Activated CD8-positive, alpha-beta T cell treated with anti-CD3 and anti-CD28 coated beads, Interleukin-2, amount 10 ng/mL, durations not matched to agents 7 days and 5 days (primary cell): ENCODE measurements at regions of chr6 and their contacts with region 1.

Region 1: GRCh38 chr6:125790358-125791150 is at the start of gene NCOA7:
- DNase-seq: peak; percentile 87
- ATAC-seq: peak; percentile 85
- H3K4me3 Mint-ChIP-seq: peak within 1 kb of the TSS; percentile 86
- H3K27ac Mint-ChIP-seq: peak within 1 kb of the TSS; percentile 98
- H3K4me1 Mint-ChIP-seq: peaks cover 45% of the 10 kb centered on the region
- H3K27me3 Mint-ChIP-seq: no peaks in the 10 kb centered on the region
- total RNA-seq, gene NCOA7: 27.8 to 31.7 TPM

Region 2: GRCh38 chr6:125779924-125780539 is 10.5 kb before region 1 on chr6:
- CTCF ChIA-PET with region 1: interaction called, 122 read pairs
- POLR2A ChIA-PET with region 1: interaction called, 186 read pairs
- DNase-seq: peak; percentile 86
- ATAC-seq: peak; percentile 82
- H3K4me3 Mint-ChIP-seq: no peak overlapping the region
- H3K27ac Mint-ChIP-seq: no peak overlapping the region
- H3K4me1 Mint-ChIP-seq: peaks cover 11% of the 10 kb centered on the region
- H3K27me3 Mint-ChIP-seq: peaks cover 22% of the 10 kb centered on the region

Region 3: DNA sequence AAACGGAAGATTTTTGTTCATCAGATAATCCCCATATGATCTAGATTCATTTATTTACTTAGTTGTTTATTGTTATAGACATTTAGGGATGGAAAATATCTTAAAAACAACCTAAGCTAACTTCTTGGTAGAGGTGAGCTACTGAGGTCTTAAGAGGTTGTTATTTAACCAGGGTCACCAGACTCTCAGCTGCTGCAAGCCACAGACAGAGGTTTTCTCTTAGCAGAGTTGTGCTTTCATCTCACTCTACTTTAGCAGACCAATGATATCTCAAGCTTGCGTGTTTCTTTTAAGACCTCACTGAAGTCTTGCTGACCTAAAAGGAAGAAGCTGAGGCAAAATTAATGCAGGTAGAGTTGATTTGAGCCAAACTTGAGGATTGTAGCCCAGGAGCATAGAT is 43.8 kb after region 1 on chr6:
- CTCF ChIA-PET with region 1: interaction called, 32 read pairs
- POLR2A ChIA-PET with region 1: interaction called, 8 read pairs
- DNase-seq: peak; percentile 34
- ATAC-seq: peak; percentile 80
- H3K4me3 Mint-ChIP-seq: no peak overlapping the region
- H3K27ac Mint-ChIP-seq: peak overlapping the region; percentile 32
- H3K4me1 Mint-ChIP-seq: peaks cover 51% of the 10 kb centered on the region
- H3K27me3 Mint-ChIP-seq: no peaks in the 10 kb centered on the region

Region 4: DNA sequence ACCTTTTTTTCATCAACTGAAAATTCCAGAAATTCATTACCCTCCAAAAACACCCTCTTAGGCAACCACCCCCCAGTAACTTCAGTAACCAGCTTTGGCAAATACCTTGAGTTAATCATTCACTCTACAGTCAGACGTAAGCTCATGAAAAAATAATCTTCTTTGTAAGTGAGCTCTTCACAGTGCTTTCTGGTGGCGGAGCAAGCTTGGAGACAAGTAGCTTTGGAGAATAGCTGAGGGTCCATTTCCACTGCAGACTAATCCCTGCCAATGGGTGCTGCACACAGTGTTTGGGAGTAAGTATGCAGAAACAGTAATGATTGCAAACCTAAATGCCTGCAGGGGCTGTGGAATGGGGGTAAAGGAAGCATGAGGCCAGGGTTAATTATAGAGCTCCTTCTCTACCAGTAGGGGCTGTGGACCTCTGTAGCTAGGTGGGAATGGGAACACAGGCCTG is 109.2 kb after region 1 on chr6:
- CTCF ChIA-PET with region 1: interaction called, 14 read pairs
- POLR2A ChIA-PET with region 1: interaction called, 8 read pairs
- DNase-seq: no peak
- ATAC-seq: no peak
- H3K4me3 Mint-ChIP-seq: no peak overlapping the region
- H3K27ac Mint-ChIP-seq: no peak overlapping the region
- H3K4me1 Mint-ChIP-seq: peaks cover 21% of the 10 kb centered on the region
- H3K27me3 Mint-ChIP-seq: no peaks in the 10 kb centered on the region

Region 5: GRCh38 chr6:125918681-125919566 is 128.4 kb after region 1 on chr6:
- CTCF ChIA-PET with region 1: interaction called, 14 read pairs
- POLR2A ChIA-PET with region 1: interaction called, 47 read pairs
- DNase-seq: peak; percentile 64
- ATAC-seq: peak; percentile 93
- H3K4me3 Mint-ChIP-seq: peak overlapping the region; percentile 75
- H3K27ac Mint-ChIP-seq: peak overlapping the region; percentile 87
- H3K4me1 Mint-ChIP-seq: peaks cover 40% of the 10 kb centered on the region
- H3K27me3 Mint-ChIP-seq: no peaks in the 10 kb centered on the region

Region 6: GRCh38 chr6:125944434-125944816 is 153.9 kb after region 1 on chr6:
- CTCF ChIA-PET with region 1: interaction called, 11 read pairs
- POLR2A ChIA-PET with region 1: interaction called, 3 read pairs
- DNase-seq: no peak
- ATAC-seq: no peak
- H3K4me3 Mint-ChIP-seq: no peak overlapping the region
- H3K27ac Mint-ChIP-seq: no peak overlapping the region
- H3K4me1 Mint-ChIP-seq: no peaks in the 10 kb centered on the region
- H3K27me3 Mint-ChIP-seq: peaks cover 34% of the 10 kb centered on the region

Region 7: DNA sequence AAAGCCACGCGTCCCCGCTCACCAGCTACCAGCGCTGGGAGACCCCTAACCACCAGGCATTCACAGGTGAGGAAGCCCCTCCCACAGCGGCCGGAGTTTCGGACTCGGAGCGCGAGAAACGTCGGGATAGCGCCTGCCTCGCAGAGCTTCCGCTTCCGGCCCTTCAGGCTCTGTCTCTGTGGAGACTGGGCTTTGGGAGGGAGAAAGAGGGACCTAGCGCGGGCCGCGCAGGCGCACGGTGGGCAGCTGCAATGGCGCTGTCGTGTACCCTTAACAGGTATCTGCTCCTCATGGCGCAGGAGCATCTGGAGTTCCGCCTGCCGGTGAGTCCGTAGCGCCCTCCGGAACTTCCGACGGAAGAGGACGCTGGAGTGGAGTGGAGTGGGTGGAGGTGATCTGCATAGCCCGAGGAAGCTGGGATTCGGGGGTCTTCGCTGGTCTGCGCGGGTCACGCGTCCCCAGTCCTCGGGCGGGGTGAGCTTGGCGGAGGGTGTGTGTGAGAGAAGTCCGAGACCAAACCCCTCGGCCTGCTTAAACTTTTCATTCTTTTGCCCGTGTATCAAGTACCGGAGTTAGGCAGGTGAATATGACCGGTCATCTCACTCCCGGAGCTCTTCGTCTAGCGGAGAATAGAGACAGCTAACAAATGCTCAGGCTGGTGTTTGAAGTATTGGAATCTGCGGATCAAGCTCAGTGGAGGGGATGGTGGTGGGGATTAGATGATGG is 195.9 kb after region 1 on chr6 and contains the start of gene TRMT11:
- CTCF ChIA-PET with region 1: interaction called, 20 read pairs
- POLR2A ChIA-PET with region 1: interaction called, 19 read pairs
- DNase-seq: peak; percentile 83
- ATAC-seq: peak; percentile 99
- H3K4me3 Mint-ChIP-seq: peak within 1 kb of the TSS; percentile 13
- H3K27ac Mint-ChIP-seq: no peak within 1 kb of the TSS
- H3K4me1 Mint-ChIP-seq: peaks cover 13% of the 10 kb centered on the region
- H3K27me3 Mint-ChIP-seq: no peaks in the 10 kb centered on the region
- total RNA-seq, gene TRMT11: 17.1 to 18.1 TPM